PC-9 (cell line): ENCODE measurements at regions of chr2 and their contacts with region 1.

Region 1: GRCh38 chr2:149994057-149994753 is 406.6 kb upstream of the MMADHC start:
- DNase-seq: peak; percentile 89 to 95
- H3K4me3 ChIP-seq: no peak overlapping the region
- H3K27ac ChIP-seq: peak overlapping the region; percentile 82
- H3K4me1 ChIP-seq: peaks cover 30% of the 10 kb centered on the region
- H3K27me3 ChIP-seq: no peaks in the 10 kb centered on the region
- CTCF ChIP-seq: no peak

Region 2: GRCh38 chr2:149799013-149799705 is 195.0 kb before region 1 on chr2:
- CTCF ChIA-PET with region 1: no interaction called
- POLR2A ChIA-PET with region 1: no interaction called
- intact Hi-C with region 1: loop called (anchors 1 kb)
- DNase-seq: peak in 1 of 2 experiments; percentile 4
- H3K4me3 ChIP-seq: no peak overlapping the region
- H3K27ac ChIP-seq: no peak overlapping the region
- H3K4me1 ChIP-seq: no peaks in the 10 kb centered on the region
- H3K27me3 ChIP-seq: no peaks in the 10 kb centered on the region
- CTCF ChIP-seq: peak; percentile 37; the same call in 1 of the 2 replicates

Region 3: DNA sequence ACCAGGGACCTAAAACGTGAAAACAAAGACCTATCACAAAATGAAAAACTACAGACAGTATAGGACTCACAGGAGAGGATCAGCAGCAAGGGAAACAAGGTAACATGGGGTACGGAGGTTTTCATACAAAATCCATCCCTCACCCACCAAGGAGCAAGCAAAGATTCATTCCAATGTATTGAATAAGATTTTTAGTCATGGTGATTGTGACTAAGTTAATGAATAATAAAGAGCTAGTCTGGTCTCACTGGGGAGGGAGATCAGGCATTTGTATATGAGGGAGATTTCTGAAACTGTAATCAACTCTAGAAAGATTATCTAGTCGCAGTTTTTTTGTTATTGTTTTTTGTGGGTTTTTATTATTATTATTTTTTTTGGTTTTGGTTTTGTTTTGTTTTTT is 70.2 kb before region 1 on chr2:
- CTCF ChIA-PET with region 1: no interaction called
- POLR2A ChIA-PET with region 1: no interaction called
- intact Hi-C with region 1: no loop called
- DNase-seq: no peak
- H3K4me3 ChIP-seq: no peak overlapping the region
- H3K27ac ChIP-seq: no peak overlapping the region
- H3K4me1 ChIP-seq: no peaks in the 10 kb centered on the region
- H3K27me3 ChIP-seq: no peaks in the 10 kb centered on the region
- CTCF ChIP-seq: no peak

Region 4: DNA sequence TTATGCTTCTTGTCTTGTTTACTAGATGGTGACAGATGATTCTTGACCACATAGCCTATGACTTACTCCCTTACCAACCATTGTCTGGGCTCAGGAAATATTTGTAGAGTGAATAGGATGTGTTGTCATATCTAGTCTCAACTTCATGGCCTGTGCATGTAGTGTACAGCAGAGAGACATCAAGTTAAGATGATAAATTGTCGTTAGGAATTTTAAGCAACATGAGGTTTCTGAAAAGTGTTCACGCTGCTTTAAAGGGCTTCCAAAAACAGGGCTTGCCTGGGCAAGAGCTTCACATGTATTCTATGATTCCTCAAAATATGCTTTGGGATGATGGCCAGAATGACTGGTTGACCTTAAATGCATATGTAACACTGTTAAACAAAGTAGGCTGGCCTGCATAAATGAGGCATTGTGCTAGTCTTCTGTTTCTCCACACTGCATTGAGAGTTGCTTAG is 69.3 kb after region 1 on chr2:
- CTCF ChIA-PET with region 1: no interaction called
- POLR2A ChIA-PET with region 1: no interaction called
- intact Hi-C with region 1: no loop called
- DNase-seq: no peak
- H3K4me3 ChIP-seq: no peak overlapping the region
- H3K27ac ChIP-seq: no peak overlapping the region
- H3K4me1 ChIP-seq: no peaks in the 10 kb centered on the region
- H3K27me3 ChIP-seq: no peaks in the 10 kb centered on the region
- CTCF ChIP-seq: no peak

Region 5: GRCh38 chr2:150143087-150143536 is 148.9 kb after region 1 on chr2:
- CTCF ChIA-PET with region 1: no interaction called
- POLR2A ChIA-PET with region 1: no interaction called
- intact Hi-C with region 1: loop called (anchors 1 kb)
- DNase-seq: peak; percentile 22 to 70
- H3K4me3 ChIP-seq: no peak overlapping the region
- H3K27ac ChIP-seq: peak overlapping the region; percentile 94
- H3K4me1 ChIP-seq: peaks cover 22% of the 10 kb centered on the region
- H3K27me3 ChIP-seq: no peaks in the 10 kb centered on the region
- CTCF ChIP-seq: no peak

Region 6: GRCh38 chr2:150410809-150411208 is 416.6 kb after region 1 on chr2:
- CTCF ChIA-PET with region 1: no interaction called
- POLR2A ChIA-PET with region 1: no interaction called
- intact Hi-C with region 1: loop called (anchors 1 kb)
- DNase-seq: peak; percentile 28 to 43
- H3K4me3 ChIP-seq: no peak overlapping the region
- H3K27ac ChIP-seq: no peak overlapping the region
- H3K4me1 ChIP-seq: no peaks in the 10 kb centered on the region
- H3K27me3 ChIP-seq: no peaks in the 10 kb centered on the region
- CTCF ChIP-seq: no peak

Region 7: DNA sequence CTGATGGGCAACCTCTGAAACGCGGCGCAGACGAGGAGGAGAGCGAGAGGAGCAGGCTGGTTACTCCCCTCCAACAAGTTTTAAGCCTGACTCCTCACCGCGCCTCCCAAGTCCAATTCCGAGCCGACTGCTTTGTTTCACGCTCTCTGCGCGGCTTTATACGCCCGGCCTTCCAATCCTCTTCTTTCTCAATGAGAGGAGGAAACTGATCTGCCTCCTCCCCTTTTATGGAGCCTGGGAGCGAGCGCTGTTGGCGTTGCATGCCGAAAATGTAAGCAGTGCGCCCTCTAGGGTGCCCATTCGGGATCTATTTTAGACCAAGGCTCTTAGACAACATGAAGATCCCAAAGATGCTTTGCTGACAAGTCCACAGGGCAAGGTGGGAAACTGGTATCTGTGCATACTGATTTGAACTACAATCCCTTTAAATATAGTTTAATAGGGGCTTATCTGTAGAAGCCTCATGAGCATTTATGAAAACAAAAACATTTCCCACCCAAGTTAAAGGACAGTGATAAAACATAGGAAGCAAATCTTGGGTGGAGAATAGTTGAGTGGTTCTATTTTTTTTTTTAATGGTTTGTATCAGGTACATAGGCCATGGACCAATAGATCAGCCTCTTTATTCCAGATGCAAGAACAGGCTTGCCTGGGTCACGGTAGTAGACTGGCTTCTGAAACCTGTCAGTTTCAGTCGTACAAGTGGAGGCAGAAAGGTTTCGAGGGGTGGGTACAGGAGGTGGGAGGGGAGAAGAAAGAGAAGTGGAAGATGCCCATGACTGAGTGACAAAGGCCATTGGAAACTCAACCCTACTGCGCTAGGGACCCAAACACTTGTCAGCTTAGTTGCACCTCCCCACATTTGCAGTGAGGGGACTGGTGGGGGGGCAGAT is 493.6 kb after region 1 on chr2 and contains the start of gene RND3:
- CTCF ChIA-PET with region 1: no interaction called
- POLR2A ChIA-PET with region 1: interaction called, 5 read pairs
- intact Hi-C with region 1: loop called (anchors 1 kb)
- DNase-seq: peak; percentile 90 to 96
- H3K4me3 ChIP-seq: peak within 1 kb of the TSS; percentile 93
- H3K27ac ChIP-seq: peak within 1 kb of the TSS; percentile 92
- H3K4me1 ChIP-seq: peaks cover 16% of the 10 kb centered on the region
- H3K27me3 ChIP-seq: no peaks in the 10 kb centered on the region
- CTCF ChIP-seq: peak; percentile 87
- total RNA-seq, gene RND3: 72.9 and 99.1 TPM in 2 replicates

Region 8: GRCh38 chr2:151043486-151043885 is 1049.3 kb after region 1 on chr2:
- CTCF ChIA-PET with region 1: interaction called, 3 read pairs
- POLR2A ChIA-PET with region 1: no interaction called
- intact Hi-C with region 1: loop called (anchors 10 kb)
- DNase-seq: peak; percentile 39 to 87
- H3K4me3 ChIP-seq: no peak overlapping the region
- H3K27ac ChIP-seq: peak overlapping the region; percentile 78
- H3K4me1 ChIP-seq: peaks cover 8% of the 10 kb centered on the region; the same call in 1 of the 2 replicates
- H3K27me3 ChIP-seq: no peaks in the 10 kb centered on the region
- CTCF ChIP-seq: no peak